ENCODE measurements at regions of chr6 and their contacts with region 1.

Region 1: GRCh38 chr6:37691904-37692806 is 5.5 kb downstream of the MDGA1 start:
- DNase-seq: peak; percentile 92
- ATAC-seq: peak; percentile 92
- H3K4me3 Mint-ChIP-seq: no peak overlapping the region
- H3K27ac Mint-ChIP-seq: no peak overlapping the region
- H3K4me1 Mint-ChIP-seq: peaks cover 13% of the 10 kb centered on the region
- H3K27me3 Mint-ChIP-seq: peaks cover 53% of the 10 kb centered on the region
- CTCF ChIP-seq: peak; percentile 99

Region 2: GRCh38 chr6:37432916-37433656 is 259.1 kb before region 1 on chr6 and contains the start of gene CMTR1:
- CTCF ChIA-PET with region 1: no interaction called
- POLR2A ChIA-PET with region 1: no interaction called
- DNase-seq: peak; percentile 96
- ATAC-seq: peak; percentile 98
- H3K4me3 Mint-ChIP-seq: peak within 1 kb of the TSS; percentile 71
- H3K27ac Mint-ChIP-seq: peak within 1 kb of the TSS; percentile 70
- H3K4me1 Mint-ChIP-seq: peaks cover 17% of the 10 kb centered on the region
- H3K27me3 Mint-ChIP-seq: no peaks in the 10 kb centered on the region; the same call in 1 of the 2 replicates
- CTCF ChIP-seq: no peak
- total RNA-seq, gene CMTR1: 33.3 to 38.6 TPM (median 35.8 TPM) in 3 replicates

Region 3: DNA sequence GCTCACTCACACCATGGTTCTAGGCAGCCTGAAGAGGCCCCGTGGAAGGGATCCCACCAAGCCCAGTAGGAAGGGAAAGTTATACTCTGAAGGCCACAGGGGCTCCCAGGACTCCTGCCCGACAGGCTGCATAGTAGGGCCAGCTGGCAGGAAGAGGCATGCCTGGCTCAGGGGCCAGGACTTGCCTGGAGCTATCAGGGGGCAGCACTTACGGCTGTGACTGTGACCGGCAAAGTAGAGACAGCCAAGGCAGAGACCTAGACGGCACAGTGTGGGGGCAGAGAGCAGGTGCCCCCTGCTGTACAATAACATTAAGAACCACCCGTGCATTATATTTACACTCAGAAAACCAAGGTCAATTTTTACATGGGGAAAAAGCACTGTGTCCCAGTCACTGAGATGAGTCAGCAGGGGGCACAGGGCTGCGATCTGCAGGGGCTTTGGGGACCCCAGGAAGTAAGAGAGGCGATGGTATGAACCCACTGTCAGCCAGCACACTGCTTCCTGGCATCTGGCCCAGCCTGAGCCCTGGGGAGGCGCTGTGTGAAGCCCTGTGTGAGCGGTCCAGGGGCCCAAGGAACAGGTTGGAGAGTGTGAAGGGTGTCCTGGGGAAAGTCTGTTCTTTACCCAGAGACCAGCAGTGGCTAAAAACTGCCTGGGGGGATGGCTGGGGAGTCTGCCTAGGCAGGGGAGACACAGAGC is 202.3 kb before region 1 on chr6:
- CTCF ChIA-PET with region 1: interaction called, 13 read pairs
- POLR2A ChIA-PET with region 1: no interaction called
- DNase-seq: no peak
- ATAC-seq: peak; percentile 16
- H3K4me3 Mint-ChIP-seq: no peak overlapping the region
- H3K27ac Mint-ChIP-seq: no peak overlapping the region; the same call in 1 of the 2 replicates
- H3K4me1 Mint-ChIP-seq: peaks cover 45% of the 10 kb centered on the region
- H3K27me3 Mint-ChIP-seq: no peaks in the 10 kb centered on the region
- CTCF ChIP-seq: no peak

Region 4: GRCh38 chr6:37559501-37559900 is 132.7 kb before region 1 on chr6:
- CTCF ChIA-PET with region 1: interaction called, 12 read pairs
- POLR2A ChIA-PET with region 1: no interaction called
- DNase-seq: no peak
- ATAC-seq: no peak
- H3K4me3 Mint-ChIP-seq: no peak overlapping the region
- H3K27ac Mint-ChIP-seq: no peak overlapping the region
- H3K4me1 Mint-ChIP-seq: peaks cover 15% of the 10 kb centered on the region
- H3K27me3 Mint-ChIP-seq: peaks cover 21% of the 10 kb centered on the region
- CTCF ChIP-seq: no peak

Region 5: DNA sequence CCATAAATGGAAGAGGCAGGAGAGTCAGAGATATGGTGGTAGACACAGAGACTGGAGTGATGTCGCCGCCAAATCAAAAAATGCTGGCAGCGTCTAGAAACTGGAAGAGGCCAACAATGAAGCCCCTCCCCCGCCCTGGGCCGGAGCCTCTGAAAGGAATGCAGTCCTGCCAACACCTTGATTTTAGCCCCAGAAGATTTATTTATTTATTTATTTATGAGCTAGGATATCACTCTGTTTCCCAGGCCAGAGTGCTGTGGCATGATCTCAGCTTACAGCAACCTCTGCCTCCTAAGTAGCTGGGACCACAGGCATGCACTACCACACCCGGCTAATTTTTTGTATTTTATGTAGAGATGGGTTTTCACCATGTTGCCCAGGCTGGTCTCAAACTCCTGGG is 109.8 kb before region 1 on chr6:
- CTCF ChIA-PET with region 1: interaction called, 10 read pairs
- POLR2A ChIA-PET with region 1: no interaction called
- DNase-seq: peak; percentile 41
- ATAC-seq: no peak; the same call in 1 of the 2 replicates
- H3K4me3 Mint-ChIP-seq: no peak overlapping the region
- H3K27ac Mint-ChIP-seq: peak overlapping the region; percentile 57; the same call in 1 of the 2 replicates
- H3K4me1 Mint-ChIP-seq: peaks cover 29% of the 10 kb centered on the region
- H3K27me3 Mint-ChIP-seq: 0 out of 2 replicates have a peak, but pooled peaks cover 2% of the 10 kb centered on the region
- CTCF ChIP-seq: no peak

Region 6: DNA sequence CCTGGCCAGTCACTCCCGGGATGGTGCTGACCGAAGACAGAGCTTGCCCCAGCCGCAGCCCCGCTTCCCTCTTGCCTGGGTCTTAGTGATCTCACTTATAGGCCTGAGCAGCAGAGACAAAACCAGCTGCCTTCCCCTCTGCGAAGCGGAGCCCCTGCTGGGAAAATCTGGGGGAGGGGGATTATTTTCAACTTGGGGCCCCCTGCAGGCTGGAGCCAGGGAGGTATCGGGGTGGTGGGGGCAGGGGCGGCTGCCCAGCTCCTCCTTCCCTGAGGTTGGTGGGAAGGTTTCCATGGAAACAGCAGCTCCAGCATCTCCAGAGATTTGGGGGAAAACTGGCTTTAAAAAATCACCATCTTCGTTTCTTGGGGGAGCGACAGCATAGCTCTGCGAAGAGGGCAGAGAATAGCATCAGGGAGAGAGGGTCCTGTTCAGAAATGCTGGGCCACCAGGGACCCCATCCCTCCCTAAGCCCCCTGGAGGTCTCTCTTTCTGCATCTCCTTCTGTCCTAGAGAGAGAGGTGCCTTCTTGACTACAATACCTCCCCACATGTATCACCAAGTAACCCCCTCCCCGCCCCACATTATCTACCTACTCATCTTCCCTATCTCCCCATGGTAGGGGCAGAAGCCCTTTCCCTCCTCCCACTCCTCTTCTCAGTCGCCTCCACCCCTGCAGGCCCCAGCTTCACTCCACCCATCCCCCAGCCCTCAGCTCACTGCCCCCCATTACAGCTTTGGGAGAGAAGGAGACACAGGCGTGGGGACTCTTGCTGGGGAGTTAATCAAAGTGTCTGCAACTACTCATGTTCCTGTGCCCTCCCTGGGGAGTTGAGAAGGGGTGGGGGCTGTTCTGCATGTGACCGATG is 104.1 kb before region 1 on chr6:
- CTCF ChIA-PET with region 1: interaction called, 10 read pairs
- POLR2A ChIA-PET with region 1: no interaction called
- DNase-seq: peak; percentile 39
- ATAC-seq: peak; percentile 53
- H3K4me3 Mint-ChIP-seq: no peak overlapping the region
- H3K27ac Mint-ChIP-seq: no peak overlapping the region
- H3K4me1 Mint-ChIP-seq: peaks cover 14% of the 10 kb centered on the region
- H3K27me3 Mint-ChIP-seq: no peaks in the 10 kb centered on the region
- CTCF ChIP-seq: no peak

Region 7: DNA sequence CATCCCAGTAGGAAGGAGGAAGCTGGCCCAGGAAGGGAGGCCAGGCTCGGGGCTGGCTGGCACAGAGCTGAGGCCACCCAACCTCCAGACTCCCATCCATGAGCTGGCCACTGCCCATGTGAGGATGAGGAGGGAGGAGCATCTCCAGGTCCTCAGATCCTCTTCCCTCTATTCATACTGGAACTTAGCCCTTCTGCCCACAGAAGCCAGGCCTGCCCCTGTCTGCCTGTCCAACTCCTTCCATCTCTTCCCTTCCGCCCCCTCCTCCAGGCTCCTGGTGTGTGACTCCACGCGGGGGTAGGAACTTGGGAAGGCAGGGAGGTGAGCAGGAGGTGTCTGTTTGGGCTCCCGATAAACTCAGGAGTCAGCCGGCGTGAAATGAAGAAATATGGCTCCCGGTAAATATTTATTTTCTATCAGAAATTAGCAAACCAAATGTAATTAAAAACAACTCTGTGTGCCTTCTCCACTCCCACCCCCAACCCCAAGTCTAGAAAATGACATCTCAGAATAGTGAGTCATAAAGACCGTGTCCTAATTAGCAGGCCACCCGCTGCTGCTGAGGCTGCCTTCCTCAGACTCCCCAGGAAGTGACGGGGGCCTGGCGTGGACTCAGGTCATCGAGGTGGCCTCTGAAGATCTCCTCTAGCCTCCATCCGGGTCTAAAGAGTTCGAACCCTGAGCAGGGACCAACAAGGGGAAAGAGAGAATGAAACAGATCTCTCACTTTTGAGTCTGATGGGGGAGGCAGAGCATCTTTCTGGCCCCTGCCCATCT is 76.4 kb before region 1 on chr6:
- CTCF ChIA-PET with region 1: no interaction called
- POLR2A ChIA-PET with region 1: no interaction called
- DNase-seq: no peak
- ATAC-seq: no peak
- H3K4me3 Mint-ChIP-seq: no peak overlapping the region
- H3K27ac Mint-ChIP-seq: no peak overlapping the region
- H3K4me1 Mint-ChIP-seq: peaks cover 4% of the 10 kb centered on the region; the same call in 1 of the 2 replicates
- H3K27me3 Mint-ChIP-seq: peaks cover 6% of the 10 kb centered on the region; the same call in 1 of the 2 replicates
- CTCF ChIP-seq: no peak

Region 8: GRCh38 chr6:37648465-37649330 is 43.5 kb before region 1 on chr6:
- CTCF ChIA-PET with region 1: interaction called, 49 read pairs
- POLR2A ChIA-PET with region 1: interaction called, 3 read pairs
- DNase-seq: peak; percentile 99
- ATAC-seq: peak; percentile 89
- H3K4me3 Mint-ChIP-seq: peak overlapping the region; percentile 58
- H3K27ac Mint-ChIP-seq: no peak overlapping the region
- H3K4me1 Mint-ChIP-seq: peaks cover 18% of the 10 kb centered on the region
- H3K27me3 Mint-ChIP-seq: peaks cover 72% of the 10 kb centered on the region
- CTCF ChIP-seq: no peak

Region 9: GRCh38 chr6:37705239-37706051 is 13.3 kb after region 1 on chr6:
- CTCF ChIA-PET with region 1: interaction called, 14 read pairs
- POLR2A ChIA-PET with region 1: no interaction called
- DNase-seq: peak; percentile 87
- ATAC-seq: peak; percentile 77
- H3K4me3 Mint-ChIP-seq: peak overlapping the region; percentile 72
- H3K27ac Mint-ChIP-seq: peak overlapping the region; percentile 97
- H3K4me1 Mint-ChIP-seq: peaks cover 16% of the 10 kb centered on the region
- H3K27me3 Mint-ChIP-seq: peaks cover 52% of the 10 kb centered on the region
- CTCF ChIP-seq: peak; percentile 76

Measured in WTC11 (cell line).